IMR-90 (cell line): ENCODE measurements at regions of chr16 and their contacts with region 1.

Region 1: DNA sequence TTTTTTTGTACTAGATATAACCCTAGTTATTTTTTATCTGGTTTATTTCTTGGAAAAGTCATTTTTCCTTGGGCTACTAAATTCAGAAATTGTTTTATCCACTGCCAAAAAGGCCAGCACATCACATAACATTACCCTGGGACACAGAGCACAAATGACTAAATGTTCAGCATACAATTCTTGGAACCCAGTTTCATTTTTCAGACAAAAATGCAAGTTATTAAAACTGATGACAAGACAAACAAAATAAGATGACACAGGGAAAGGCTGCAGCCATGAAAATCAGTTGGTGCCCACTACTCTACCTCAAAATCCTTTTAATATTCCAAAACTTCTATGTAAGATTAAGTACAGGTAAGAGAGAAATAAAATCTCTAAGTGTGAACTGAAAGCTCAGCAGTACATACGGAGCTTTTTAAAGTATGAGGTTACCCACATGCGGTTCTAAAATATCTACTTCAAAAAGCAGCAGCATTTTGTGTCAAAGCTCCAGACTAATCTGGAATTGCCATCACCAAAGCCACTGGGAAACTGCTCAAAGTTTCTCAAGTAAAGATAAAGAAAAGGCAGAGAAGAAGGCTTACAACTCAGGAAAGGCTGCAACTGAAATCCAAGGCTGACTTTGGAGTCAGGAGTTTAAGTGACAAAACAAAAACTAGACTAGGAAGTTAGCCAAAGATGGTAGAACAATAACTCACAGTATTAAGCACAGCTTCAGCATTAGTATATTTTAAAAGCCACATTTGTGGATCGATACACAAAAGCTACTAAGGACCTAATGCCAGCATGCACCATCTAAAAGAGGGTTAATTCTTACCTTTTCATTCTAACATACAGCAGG is 41.4 kb downstream of the AP1G1 start:
- DNase-seq: no peak
- ATAC-seq: no peak
- H3K4me3 ChIP-seq: no peak overlapping the region
- H3K27ac ChIP-seq: no peak overlapping the region; the same call in 1 of the 2 replicates
- H3K4me1 ChIP-seq: no peaks in the 10 kb centered on the region; the same call in 1 of the 2 replicates
- H3K27me3 ChIP-seq: no peaks in the 10 kb centered on the region
- CTCF ChIP-seq: no peak
- POLR2A ChIP-seq: no peak
- RAD21 ChIP-seq: no peak

Region 2: GRCh38 chr16:71734511-71734910 is 32.8 kb before region 1 on chr16:
- CTCF ChIA-PET with region 1: no interaction called
- POLR2A ChIA-PET with region 1: no interaction called
- dilution Hi-C with region 1: no loop called
- in situ Hi-C with region 1: no loop called
- intact Hi-C with region 1: loop called (anchors 5 kb)
- DNase-seq: no peak
- ATAC-seq: no peak
- H3K4me3 ChIP-seq: no peak overlapping the region
- H3K27ac ChIP-seq: no peak overlapping the region
- H3K4me1 ChIP-seq: no peaks in the 10 kb centered on the region
- H3K27me3 ChIP-seq: no peaks in the 10 kb centered on the region
- CTCF ChIP-seq: no peak
- POLR2A ChIP-seq: no peak
- RAD21 ChIP-seq: no peak